Gastrocnemius medialis (tissue), 4 donors: ENCODE measurements at regions of chr19 and their contacts with region 1.

Region 1: GRCh38 chr19:43532962-43533545 is at the start of gene ZNF575:
- DNase-seq: peak; percentile 64 to 81
- ATAC-seq: peak; percentile 55 to 66
- H3K4me3 ChIP-seq: peak within 1 kb of the TSS; percentile 57 to 87 (median 72)
- H3K27ac ChIP-seq: peak within 1 kb of the TSS; percentile 76 to 86 (median 80)
- H3K4me1 ChIP-seq: peaks cover 13 to 20% of the 10 kb centered on the region in 2 donors
- H3K27me3 ChIP-seq: no peaks in the 10 kb centered on the region
- CTCF ChIP-seq: peak in 1 of 5 experiments; percentile 30
- POLR2A ChIP-seq: no peak
- total RNA-seq, gene ZNF575: not detected

Region 2: DNA sequence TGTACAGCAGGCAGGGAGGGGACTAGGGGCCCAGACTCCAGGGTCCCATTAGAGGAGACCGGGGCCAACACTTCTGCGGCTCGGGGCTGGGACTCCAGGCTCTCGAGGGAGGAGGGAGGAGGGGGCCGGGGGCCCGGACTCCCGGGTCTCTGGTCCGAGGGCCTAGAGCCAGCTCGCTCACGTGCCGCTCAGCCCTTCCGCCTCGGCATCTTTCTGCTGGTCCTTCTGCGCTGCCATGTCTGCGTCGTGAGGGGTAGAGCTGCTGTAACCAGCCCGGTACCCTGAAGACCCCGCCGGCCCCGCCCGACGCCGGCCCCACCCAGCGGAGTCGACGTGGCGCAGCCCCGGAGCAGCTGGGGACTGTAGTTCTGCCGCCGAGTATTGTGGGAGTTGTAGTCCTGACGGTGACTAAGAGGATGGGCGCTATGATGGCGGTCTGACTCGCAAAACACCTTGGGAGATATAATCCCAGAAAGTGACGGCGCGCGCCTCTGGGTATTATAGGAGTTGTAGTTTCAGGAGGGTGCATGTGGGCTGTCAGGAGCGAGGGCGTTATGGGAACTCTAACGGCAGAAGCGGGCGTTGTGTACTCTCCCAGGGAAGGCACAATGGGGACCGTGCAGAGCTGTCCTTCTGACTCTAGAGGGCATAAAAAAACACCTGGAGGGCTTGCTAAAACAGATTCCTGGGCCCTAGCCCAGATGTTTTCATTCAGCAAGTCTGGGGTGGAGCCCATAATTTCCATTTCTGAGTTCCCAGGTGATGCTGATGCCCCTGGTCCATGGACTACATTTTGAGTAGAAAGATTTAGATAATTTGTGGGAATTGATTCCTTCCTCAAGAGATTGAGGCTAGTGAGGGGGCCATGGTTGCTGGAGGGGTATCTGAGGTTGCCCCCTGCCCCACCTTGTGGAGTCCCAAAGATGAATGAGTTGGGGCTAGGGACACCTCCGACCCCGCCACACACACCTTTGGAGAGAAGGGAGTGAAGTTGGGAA is 1573.7 kb before region 1 on chr19 and contains the start of gene RABAC1:
- in situ Hi-C with region 1: no loop called
- intact Hi-C with region 1: loop called (anchors 5 kb)
- DNase-seq: peak; percentile 81 to 83
- ATAC-seq: peak; percentile 96
- H3K4me3 ChIP-seq: peak within 1 kb of the TSS; percentile 63 to 96 (median 92)
- H3K27ac ChIP-seq: peak within 1 kb of the TSS; percentile 82 to 89 (median 86)
- H3K4me1 ChIP-seq: peaks cover 11 to 15% of the 10 kb centered on the region in 2 donors
- H3K27me3 ChIP-seq: no peaks in the 10 kb centered on the region
- CTCF ChIP-seq: no peak
- POLR2A ChIP-seq: peak in 1 of 2 donors; percentile 32
- total RNA-seq, gene RABAC1: 94.4 to 146 (median 110) TPM

Region 3: DNA sequence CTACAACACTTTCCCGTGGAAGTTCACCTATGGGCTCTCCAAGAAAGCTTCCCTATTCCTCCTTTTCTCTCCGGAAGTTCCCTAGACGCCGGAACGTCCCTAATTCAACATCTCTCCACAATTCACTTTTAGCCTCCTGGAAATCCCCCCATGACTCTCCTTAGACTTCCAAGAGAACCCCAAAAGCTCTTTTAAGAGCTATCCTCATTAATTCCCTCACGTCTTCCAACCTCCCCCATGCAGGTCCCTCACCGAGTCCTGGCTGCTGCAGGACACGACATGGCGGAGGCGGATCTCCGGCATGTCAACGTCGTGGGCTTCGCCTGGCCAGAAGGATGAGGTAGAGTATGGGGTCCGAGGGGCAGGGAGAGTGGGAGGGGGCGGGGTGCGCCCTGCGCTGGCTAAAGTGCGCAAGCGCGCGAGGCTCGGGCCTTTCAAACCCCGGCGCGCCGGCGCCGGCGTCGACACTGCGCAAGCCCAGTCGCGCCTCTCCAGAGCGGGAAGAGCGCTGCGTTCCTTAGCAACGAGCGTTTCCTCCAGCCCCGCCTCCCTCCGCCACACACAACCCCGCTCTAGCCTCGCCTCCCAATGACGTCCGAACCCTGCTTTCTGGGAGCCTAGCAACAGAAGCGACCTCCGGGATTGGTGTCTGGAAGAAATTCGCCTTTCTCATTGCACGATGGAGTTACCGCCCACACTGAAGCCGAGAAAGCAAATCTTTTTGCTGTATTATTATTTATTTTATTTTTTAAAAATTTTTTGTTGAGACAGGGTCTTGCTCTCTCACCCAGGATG is 42.3 kb after region 1 on chr19 and contains the starts of genes PINLYP and XRCC1:
- in situ Hi-C with region 1: no loop called
- intact Hi-C with region 1: loop called (anchors 5 kb)
- DNase-seq: peak; percentile 96 to 97
- ATAC-seq: peak; percentile 100
- H3K4me3 ChIP-seq: peak within 1 kb of the TSS; percentile 75 to 98 (median 88)
- H3K27ac ChIP-seq: peak within 1 kb of the TSS; percentile 77 to 87 (median 82)
- H3K4me1 ChIP-seq: peaks cover 10 to 13% of the 10 kb centered on the region in 2 donors
- H3K27me3 ChIP-seq: no peaks in the 10 kb centered on the region
- CTCF ChIP-seq: no peak
- POLR2A ChIP-seq: peak; percentile 43 to 44
- total RNA-seq, gene PINLYP: 1.2 TPM in 1 of 4 donors, not detected in the others
- total RNA-seq, gene XRCC1: 9.3 to 20.3 (median 16.7) TPM

Region 4: GRCh38 chr19:43595999-43596841 is 63.2 kb after region 1 on chr19 and contains the starts of genes IRGQ and ZNF576:
- in situ Hi-C with region 1: no loop called
- intact Hi-C with region 1: loop called (anchors 1 kb)
- DNase-seq: peak; percentile 100
- ATAC-seq: peak; percentile 97
- H3K4me3 ChIP-seq: peak within 1 kb of the TSS; percentile 65 to 86 (median 77)
- H3K27ac ChIP-seq: peak within 1 kb of the TSS; percentile 93 to 98 (median 96)
- H3K4me1 ChIP-seq: peaks cover 27 to 34% of the 10 kb centered on the region in 2 donors
- H3K27me3 ChIP-seq: no peaks in the 10 kb centered on the region
- CTCF ChIP-seq: peak in 2 of 5 experiments; percentile 8
- POLR2A ChIP-seq: peak; percentile 89 to 93
- total RNA-seq, gene IRGQ: 20.2 to 25.8 (median 23.6) TPM
- total RNA-seq, gene ZNF576: 6.9 to 19.8 (median 11.6) TPM

Region 5: DNA sequence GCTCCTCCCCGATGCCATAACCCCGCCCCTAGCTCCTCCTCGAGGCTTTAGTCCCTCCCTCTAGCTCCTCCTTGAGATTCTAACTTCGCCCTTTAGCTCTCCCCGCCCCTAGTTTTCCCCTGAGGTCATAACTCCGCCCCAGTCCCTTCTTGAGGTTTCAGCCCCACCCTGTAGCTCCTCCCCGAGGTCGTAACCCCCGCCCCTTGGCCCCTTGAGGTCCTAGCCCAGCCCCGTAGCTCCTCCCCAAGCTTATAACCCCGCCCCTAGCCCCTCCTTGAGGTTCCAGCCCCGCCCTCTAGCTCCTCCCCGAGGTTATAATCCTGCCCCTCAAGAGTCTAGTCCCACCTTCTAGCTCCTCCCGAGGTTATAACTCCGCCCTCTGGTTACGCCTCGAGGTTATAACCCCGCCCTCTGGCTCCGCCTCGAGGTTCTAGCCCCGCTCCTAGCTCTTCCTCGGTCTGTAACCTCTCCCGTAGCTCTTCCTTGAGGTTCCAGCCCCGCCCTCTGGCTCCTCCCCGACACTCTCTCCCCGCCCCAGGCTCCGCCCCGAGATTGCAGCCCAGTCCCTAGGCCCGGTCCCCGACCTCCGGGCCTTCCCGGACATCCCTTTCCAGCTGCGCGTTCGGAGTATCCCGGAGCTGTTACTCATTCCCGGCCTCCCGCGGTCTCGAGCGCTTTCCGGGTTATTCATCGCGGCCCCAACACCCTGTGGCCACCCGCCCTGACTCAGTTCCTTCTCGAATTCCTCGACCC is 135.5 kb after region 1 on chr19:
- in situ Hi-C with region 1: loop called in 1 of 4 experiments (anchors 25 kb)
- intact Hi-C with region 1: no loop called
- DNase-seq: peak; percentile 92 to 93
- ATAC-seq: peak; percentile 94
- H3K4me3 ChIP-seq: peak overlapping the region; percentile 50 to 68 (median 60)
- H3K27ac ChIP-seq: peak overlapping the region; percentile 74 to 87 (median 86)
- H3K4me1 ChIP-seq: peaks cover 2 to 5% of the 10 kb centered on the region in 2 donors
- H3K27me3 ChIP-seq: peaks cover 15 to 35% (median 27%) of the 10 kb centered on the region in 3 donors
- CTCF ChIP-seq: no peak
- POLR2A ChIP-seq: peak; percentile 54 to 84

Region 6: DNA sequence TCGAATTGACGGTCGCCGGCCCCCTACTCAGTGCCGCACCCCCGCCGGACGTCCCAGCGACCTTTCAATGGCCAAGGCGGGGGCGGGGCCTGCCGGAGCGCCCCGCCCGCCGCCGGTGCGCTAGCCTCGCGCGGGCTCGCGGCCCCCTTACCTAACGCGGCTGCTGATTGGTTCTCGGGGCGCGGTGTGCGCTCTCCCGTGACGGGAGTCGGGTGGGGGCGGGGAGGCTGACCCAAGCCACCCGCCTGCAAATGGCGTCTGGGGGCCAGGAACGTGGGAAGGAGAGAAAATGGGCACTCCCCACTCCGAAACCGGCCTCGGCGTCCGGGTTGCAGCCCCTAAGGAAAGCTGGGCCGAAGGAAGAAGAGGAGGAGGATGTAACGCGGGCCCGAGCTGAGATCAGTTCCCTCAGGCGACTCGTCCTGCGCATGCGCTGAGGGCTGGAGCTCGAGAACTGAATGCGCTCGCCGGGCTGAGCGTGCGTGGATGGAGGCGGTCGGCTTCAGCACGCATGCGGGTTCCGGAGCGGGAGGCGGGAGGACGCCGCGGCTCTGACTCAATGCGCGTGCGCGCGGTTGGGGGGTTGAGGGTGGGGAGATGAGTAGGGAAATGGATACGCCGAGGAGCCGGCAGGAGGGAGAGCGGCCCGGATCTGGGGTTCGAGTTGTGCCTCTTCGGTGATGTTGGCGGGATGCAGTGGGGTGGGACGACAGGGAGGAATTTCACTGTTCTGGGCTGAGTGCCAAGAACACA is 221.6 kb after region 1 on chr19 and contains the start of gene SMG9:
- in situ Hi-C with region 1: no loop called
- intact Hi-C with region 1: loop called (anchors 10 kb)
- DNase-seq: peak; percentile 96 to 97
- ATAC-seq: peak; percentile 93 to 94
- H3K4me3 ChIP-seq: peak within 1 kb of the TSS; percentile 75 to 82 (median 80)
- H3K27ac ChIP-seq: peak within 1 kb of the TSS; percentile 98 to 99 (median 98)
- H3K4me1 ChIP-seq: peaks cover 5 to 19% of the 10 kb centered on the region in 2 donors
- H3K27me3 ChIP-seq: no peaks in the 10 kb centered on the region
- CTCF ChIP-seq: no peak
- POLR2A ChIP-seq: peak; percentile 70 to 77
- total RNA-seq, gene SMG9: 4.5 to 9.1 (median 7.1) TPM